HEK293 (cell line): ENCODE measurements at regions of chr21 and their contacts with region 1.

Region 1: DNA sequence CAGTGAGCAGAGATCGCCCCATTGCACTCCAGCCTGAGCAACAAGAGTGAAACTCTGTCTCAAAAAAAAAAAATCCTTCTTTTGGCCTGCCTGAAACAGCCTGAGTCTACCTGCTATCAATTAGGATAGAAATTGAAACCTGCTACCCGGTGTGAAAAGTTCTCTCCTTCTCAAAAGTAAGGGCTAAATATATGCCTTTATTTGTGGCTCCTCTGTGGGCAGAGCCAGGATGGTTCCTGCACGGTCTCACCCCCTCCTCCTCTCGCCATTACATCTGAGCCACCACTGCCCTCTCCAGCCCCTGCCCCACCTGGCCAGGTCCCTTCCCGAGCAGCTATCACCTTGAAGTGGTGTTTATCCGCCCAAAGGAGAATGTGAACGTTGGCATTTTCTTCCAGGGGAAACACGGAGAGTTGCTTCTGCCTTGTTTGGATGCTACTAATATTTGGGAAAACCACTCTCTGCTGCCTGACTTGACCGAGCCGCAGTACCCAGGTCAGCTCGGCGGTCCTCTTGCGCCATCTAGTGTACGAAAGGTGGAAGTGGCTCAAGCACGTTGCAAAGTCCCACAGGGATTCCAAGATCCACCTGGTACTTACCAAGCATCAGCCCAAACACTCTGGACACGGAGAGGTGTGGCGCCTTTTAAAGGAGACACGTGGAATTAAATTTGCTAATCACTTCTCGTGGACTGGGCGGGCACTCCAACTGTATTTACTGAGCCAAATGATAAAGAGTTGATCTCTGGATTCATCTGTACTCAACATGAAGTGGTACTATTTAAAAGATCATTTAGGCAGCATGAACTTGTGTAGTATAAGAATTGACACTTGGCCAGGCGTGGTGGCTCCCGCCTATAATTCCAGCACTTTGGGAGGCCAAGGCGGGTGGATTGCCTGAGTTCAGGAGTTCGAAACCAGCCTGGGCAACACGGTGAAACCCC is 31.9 kb downstream of the SETD4 start:
- H3K4me3 ChIP-seq: no peak overlapping the region
- H3K27ac ChIP-seq: no peak overlapping the region
- H3K4me1 ChIP-seq: no peaks in the 10 kb centered on the region
- CTCF ChIP-seq: peak; percentile 88

Region 2: GRCh38 chr21:35974818-35975217 is 53.6 kb before region 1 on chr21:
- CTCF ChIA-PET with region 1: interaction called, 10 read pairs
- POLR2A ChIA-PET with region 1: no interaction called
- H3K4me3 ChIP-seq: no peak overlapping the region
- H3K27ac ChIP-seq: no peak overlapping the region
- H3K4me1 ChIP-seq: no peaks in the 10 kb centered on the region
- CTCF ChIP-seq: no peak